Activated CD4-positive, alpha-beta memory T cell treated with anti-CD3 and anti-CD28 coated beads for 36 hours (primary cell): ENCODE measurements at regions of chr5 and their contacts with region 1.

Region 1: GRCh38 chr5:140372971-140373487 is 13.0 kb downstream of the SLC4A9 start:
- DNase-seq: peak; percentile 48
- H3K4me3 Mint-ChIP-seq: no peak overlapping the region
- H3K27ac Mint-ChIP-seq: no peak overlapping the region
- H3K4me1 Mint-ChIP-seq: peaks cover 3% of the 10 kb centered on the region
- H3K27me3 Mint-ChIP-seq: no peaks in the 10 kb centered on the region

Region 2: DNA sequence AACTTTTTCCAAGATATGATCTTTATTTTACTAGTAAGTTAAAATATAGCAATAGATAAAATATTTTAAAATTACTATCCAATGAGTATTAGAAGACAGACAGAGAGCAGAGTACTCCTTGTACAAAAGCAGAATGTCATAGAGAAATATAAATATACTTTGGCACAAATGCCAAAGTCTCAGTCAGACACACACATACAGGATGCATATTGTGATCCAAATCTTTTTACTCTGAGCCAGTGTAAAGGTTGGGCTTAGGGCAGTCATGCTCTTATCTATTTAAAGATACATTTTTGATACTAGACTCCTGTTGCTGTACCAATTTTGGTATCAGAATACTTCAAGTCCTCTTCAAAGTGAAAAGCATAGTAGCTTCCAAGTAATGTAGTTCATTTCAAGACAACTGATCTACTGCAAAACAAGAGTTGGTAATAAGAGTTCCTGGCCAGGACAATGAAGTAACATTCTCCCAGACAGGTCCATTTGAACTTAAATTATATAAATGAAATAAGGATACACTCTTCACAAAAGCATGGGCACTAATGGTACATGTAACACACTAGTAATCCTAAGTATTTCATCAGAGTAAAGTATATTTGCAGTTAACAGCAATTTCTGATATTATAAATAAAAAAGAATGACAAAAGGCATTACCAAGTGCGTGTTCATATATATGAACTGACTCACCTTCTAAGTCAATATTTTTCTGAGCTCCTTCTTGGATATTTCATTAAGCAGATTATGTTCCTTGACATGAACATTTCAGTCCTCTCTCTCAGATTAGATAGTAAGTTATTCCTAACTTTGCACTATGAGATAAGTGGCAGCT is 80.6 kb before region 1 on chr5:
- CTCF ChIA-PET with region 1: no interaction called
- POLR2A ChIA-PET with region 1: no interaction called
- intact Hi-C with region 1: no loop called
- DNase-seq: no peak
- H3K4me3 Mint-ChIP-seq: no peak overlapping the region
- H3K27ac Mint-ChIP-seq: peak overlapping the region; percentile 1
- H3K4me1 Mint-ChIP-seq: peaks cover 59% of the 10 kb centered on the region
- H3K27me3 Mint-ChIP-seq: no peaks in the 10 kb centered on the region

Region 3: GRCh38 chr5:140357726-140358093 is 15.3 kb before region 1 on chr5:
- CTCF ChIA-PET with region 1: interaction called, 24 read pairs
- POLR2A ChIA-PET with region 1: no interaction called
- intact Hi-C with region 1: no loop called
- DNase-seq: peak; percentile 89
- H3K4me3 Mint-ChIP-seq: peak overlapping the region; percentile 66
- H3K27ac Mint-ChIP-seq: no peak overlapping the region
- H3K4me1 Mint-ChIP-seq: peaks cover 14% of the 10 kb centered on the region
- H3K27me3 Mint-ChIP-seq: peaks cover 5% of the 10 kb centered on the region

Region 4: DNA sequence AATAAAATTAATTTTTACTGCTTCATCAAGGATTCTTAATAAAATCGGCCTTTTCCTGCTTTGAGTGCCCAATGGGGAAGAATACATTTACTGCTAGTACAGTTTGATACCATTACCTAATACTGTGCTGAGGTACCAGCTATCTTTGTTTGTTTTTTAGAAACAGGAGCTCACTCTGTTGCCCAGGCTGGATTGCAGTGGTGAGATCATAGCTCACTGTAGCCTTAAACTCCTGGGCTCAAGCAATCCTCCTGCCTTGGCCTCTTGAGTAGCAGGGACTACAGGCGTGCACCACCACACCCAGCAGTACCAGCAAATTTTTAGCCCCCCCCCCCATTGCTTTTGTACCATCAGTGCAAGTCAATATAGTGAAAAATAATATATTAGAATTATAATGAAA is 15.0 kb after region 1 on chr5:
- CTCF ChIA-PET with region 1: interaction called, 12 read pairs
- POLR2A ChIA-PET with region 1: no interaction called
- intact Hi-C with region 1: no loop called
- DNase-seq: no peak
- H3K4me3 Mint-ChIP-seq: no peak overlapping the region
- H3K27ac Mint-ChIP-seq: no peak overlapping the region
- H3K4me1 Mint-ChIP-seq: peaks cover 3% of the 10 kb centered on the region
- H3K27me3 Mint-ChIP-seq: no peaks in the 10 kb centered on the region

Region 5: DNA sequence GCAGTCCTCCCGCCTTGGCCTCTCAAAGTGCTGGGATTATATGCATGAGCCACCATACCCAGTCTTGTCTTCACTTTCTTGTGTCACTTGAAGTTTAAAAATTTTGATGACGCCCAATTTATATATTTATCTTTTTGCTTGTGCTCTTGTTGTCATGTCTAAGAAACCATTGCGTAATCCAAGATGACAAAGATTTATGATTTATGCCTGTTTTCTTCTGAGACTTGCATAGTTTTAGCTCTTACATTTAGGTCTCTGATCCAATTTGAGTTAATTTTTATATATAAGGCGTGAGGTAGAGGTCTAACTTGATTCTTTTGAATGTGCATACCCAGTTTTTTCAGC is 47.2 kb after region 1 on chr5:
- CTCF ChIA-PET with region 1: interaction called, 11 read pairs
- POLR2A ChIA-PET with region 1: no interaction called
- intact Hi-C with region 1: no loop called
- DNase-seq: no peak
- H3K4me3 Mint-ChIP-seq: no peak overlapping the region
- H3K27ac Mint-ChIP-seq: no peak overlapping the region
- H3K4me1 Mint-ChIP-seq: peaks cover 55% of the 10 kb centered on the region
- H3K27me3 Mint-ChIP-seq: no peaks in the 10 kb centered on the region

Region 6: DNA sequence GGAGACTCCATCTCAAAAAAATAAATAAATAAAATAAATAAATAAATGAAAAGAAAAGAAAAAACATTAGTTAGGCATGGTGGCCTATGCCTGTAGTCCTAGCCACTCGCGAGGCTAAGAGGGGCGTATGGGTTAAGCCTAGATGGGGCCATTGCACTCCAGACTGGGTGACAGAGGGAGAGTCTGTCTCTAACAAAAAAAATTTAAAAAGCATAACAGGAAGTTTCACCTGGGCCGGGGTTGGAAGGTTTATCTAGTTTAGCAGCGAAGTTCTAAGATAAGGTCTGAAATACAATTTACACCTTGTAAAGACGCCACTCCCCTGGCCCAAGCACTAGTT is 345.2 kb after region 1 on chr5:
- CTCF ChIA-PET with region 1: interaction called, 19 read pairs
- POLR2A ChIA-PET with region 1: no interaction called
- intact Hi-C with region 1: loop called (anchors 1 kb)
- DNase-seq: no peak
- H3K4me3 Mint-ChIP-seq: no peak overlapping the region
- H3K27ac Mint-ChIP-seq: no peak overlapping the region
- H3K4me1 Mint-ChIP-seq: peaks cover 4% of the 10 kb centered on the region
- H3K27me3 Mint-ChIP-seq: peaks cover 10% of the 10 kb centered on the region